ENCODE measurements at regions of chr1 and their contacts with region 1.

Region 1: DNA sequence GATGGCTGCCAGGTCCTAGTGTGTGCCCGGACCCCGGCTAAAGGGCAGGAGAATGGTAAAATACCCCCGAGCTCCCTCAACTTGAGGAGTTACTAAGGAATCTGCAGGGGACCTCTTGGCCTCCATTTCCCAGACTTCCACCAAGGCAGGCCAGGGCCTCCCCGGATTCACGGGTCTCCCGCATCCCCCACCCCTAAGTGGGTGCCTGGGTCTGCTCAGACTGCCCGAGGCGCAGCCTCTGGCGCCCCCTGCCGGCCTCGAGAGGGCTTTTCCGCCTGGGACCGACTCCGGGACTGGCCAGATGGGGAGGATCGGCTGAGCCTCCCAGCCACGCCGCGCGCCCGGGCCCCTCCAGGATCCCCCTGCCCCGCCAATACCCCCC is 1.7 kb downstream of the PLEKHG5 start:
- DNase-seq: peak; percentile 34 to 88 (median 64)
- ATAC-seq: peak; percentile 69 to 72 (median 71)
- H3K4me3 ChIP-seq: peak overlapping the region; percentile 68 to 84
- H3K4me3 Mint-ChIP-seq: peak overlapping the region; percentile 67 to 81 (median 70)
- H3K27ac ChIP-seq: no peak overlapping the region
- H3K27ac Mint-ChIP-seq: no peak overlapping the region
- H3K4me1 ChIP-seq: peaks cover 2 to 58% of the 10 kb centered on the region in 2 experiments
- H3K4me1 Mint-ChIP-seq: peaks cover 22 to 31% (median 28%) of the 10 kb centered on the region in 3 donors
- H3K27me3 ChIP-seq: peaks cover 0 to 48% of the 10 kb centered on the region in 2 experiments
- H3K27me3 Mint-ChIP-seq: peaks cover 13 to 14% of the 10 kb centered on the region in 2 donors

Region 2: GRCh38 chr1:6259491-6260425 is 230.0 kb before region 1 on chr1:
- CTCF ChIA-PET with region 1: no interaction called
- POLR2A ChIA-PET with region 1: no interaction called
- DNase-seq: peak; percentile 46 to 87 (median 72)
- ATAC-seq: peak; percentile 70 to 84 (median 76)
- H3K4me3 ChIP-seq: peak overlapping the region; percentile 25 to 41
- H3K4me3 Mint-ChIP-seq: peak overlapping the region; percentile 56 to 62 (median 59)
- H3K27ac ChIP-seq: no peak overlapping the region
- H3K27ac Mint-ChIP-seq: no peak overlapping the region
- H3K4me1 ChIP-seq: peaks cover 0 to 18% of the 10 kb centered on the region in 2 experiments
- H3K4me1 Mint-ChIP-seq: peaks cover 2 to 11% (median 6%) of the 10 kb centered on the region in 3 donors
- H3K27me3 ChIP-seq: peaks cover 2 to 50% of the 10 kb centered on the region in 2 experiments
- H3K27me3 Mint-ChIP-seq: peaks cover 4 to 17% of the 10 kb centered on the region in 2 donors

Region 3: GRCh38 chr1:6438047-6438525 is 51.7 kb before region 1 on chr1:
- CTCF ChIA-PET with region 1: no interaction called
- POLR2A ChIA-PET with region 1: interaction called in 1 of 2 experiments, 10 read pairs
- DNase-seq: peak in 34 of 35 experiments; percentile 25 to 83 (median 58)
- ATAC-seq: peak; percentile 41 to 60 (median 49)
- H3K4me3 ChIP-seq: no peak overlapping the region
- H3K4me3 Mint-ChIP-seq: peak overlapping the region in 1 of 3 donors; percentile 52
- H3K27ac ChIP-seq: no peak overlapping the region
- H3K27ac Mint-ChIP-seq: peak overlapping the region in 1 of 2 donors; percentile 21
- H3K4me1 ChIP-seq: peaks cover 0 to 21% of the 10 kb centered on the region in 2 experiments
- H3K4me1 Mint-ChIP-seq: peaks cover 9 to 18% (median 14%) of the 10 kb centered on the region in 3 donors
- H3K27me3 ChIP-seq: peaks cover 0 to 54% of the 10 kb centered on the region in 2 experiments
- H3K27me3 Mint-ChIP-seq: peaks cover 19 to 31% of the 10 kb centered on the region in 2 donors

Region 4: GRCh38 chr1:6547301-6547700 is 57.5 kb after region 1 on chr1:
- CTCF ChIA-PET with region 1: interaction called in 1 of 2 experiments, 16 read pairs
- POLR2A ChIA-PET with region 1: no interaction called
- DNase-seq: no peak
- ATAC-seq: no peak
- H3K4me3 ChIP-seq: no peak overlapping the region
- H3K4me3 Mint-ChIP-seq: peak overlapping the region in 1 of 3 donors; percentile 51
- H3K27ac ChIP-seq: peak overlapping the region; percentile 77
- H3K27ac Mint-ChIP-seq: peak overlapping the region; percentile 90 to 92
- H3K4me1 ChIP-seq: peaks cover 12 to 40% of the 10 kb centered on the region in 2 experiments
- H3K4me1 Mint-ChIP-seq: peaks cover 30 to 40% (median 31%) of the 10 kb centered on the region in 3 donors
- H3K27me3 ChIP-seq: no peaks in the 10 kb centered on the region
- H3K27me3 Mint-ChIP-seq: no peaks in the 10 kb centered on the region

Measured in T-cell (primary cell).